GM12878 (cell line): ENCODE measurements at regions of chr2 and their contacts with region 1.

Region 1: DNA sequence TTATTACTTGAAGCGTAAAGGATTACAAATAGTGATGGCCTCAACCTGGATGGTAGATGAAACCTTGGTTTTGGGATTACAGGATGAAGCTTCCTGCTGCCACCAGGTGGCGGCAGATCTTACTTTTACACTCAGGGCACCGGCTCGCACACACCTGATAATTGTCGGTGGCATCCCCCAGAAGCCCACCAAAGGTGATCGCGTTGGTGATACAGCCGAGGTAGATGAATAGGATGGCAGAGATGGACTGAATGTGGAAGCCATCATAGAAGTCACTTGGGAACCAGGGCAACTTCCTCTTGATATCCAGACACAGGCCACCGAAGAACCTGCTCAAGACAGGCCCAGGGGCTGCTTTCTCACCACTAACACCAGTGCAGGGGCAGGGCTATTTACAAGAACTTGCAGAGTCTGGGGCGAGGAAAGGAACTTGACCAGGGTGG is 51.8 kb downstream of the MTHFD2 start:
- DNase-seq: peak; percentile 17
- ATAC-seq: peak; percentile 95
- H3K4me3 ChIP-seq: no peak overlapping the region
- H3K27ac ChIP-seq: no peak overlapping the region
- H3K4me1 ChIP-seq: no peaks in the 10 kb centered on the region
- H3K27me3 ChIP-seq: no peaks in the 10 kb centered on the region
- CTCF ChIP-seq: peak; percentile 78 to 87 (median 84)
- EP300 ChIP-seq: no peak
- POLR2A ChIP-seq: no peak
- RAD21 ChIP-seq: peak; percentile 82

Region 2: DNA sequence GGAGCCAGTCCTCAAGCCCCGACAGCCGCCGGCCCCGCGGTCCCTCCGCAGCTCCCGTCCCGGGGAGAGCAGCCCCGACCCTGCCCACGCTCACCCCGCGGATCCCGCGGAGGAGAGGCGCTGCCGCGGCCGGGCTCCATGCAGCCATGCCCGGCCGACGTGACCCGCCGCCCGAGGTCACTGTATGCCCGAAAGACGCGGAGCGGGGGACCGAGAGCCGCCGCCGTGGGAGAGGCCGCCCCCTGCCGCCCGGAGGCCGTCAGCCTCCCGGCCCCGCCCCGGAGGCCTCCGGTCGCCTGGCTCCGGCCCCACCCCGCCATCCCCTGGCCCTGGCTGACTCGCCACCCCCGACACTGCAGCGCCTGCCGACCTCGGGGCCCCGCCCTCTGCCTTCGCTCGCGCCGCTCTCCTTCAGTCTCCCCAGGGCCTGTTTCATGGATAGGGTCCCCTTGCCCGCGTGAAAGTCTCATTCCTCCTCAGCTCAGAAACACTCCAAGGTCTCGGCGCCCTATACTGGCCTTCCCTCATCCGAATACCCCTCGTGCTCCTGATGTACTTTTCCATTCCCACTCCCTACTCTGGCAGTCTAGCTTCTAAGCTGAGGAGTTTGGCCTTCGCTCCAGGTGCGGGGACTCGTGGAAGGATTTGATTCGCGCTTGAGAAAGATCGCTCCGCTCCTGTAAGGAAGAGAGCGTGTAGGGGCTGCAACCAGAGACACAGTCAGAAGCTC is 102.3 kb before region 1 on chr2 and contains the start of gene BOLA3:
- CTCF ChIA-PET with region 1: interaction called, 12 read pairs
- POLR2A ChIA-PET with region 1: no interaction called
- RAD21 ChIA-PET with region 1: interaction called, 3 read pairs
- SMC1A ChIA-PET with region 1: interaction called, 6 read pairs
- in situ Hi-C with region 1: no loop called
- intact Hi-C with region 1: no loop called
- DNase-seq: peak; percentile 32
- ATAC-seq: peak; percentile 97
- H3K4me3 ChIP-seq: peak within 1 kb of the TSS; percentile 89
- H3K27ac ChIP-seq: peak within 1 kb of the TSS; percentile 60
- H3K4me1 ChIP-seq: peaks cover 7% of the 10 kb centered on the region
- H3K27me3 ChIP-seq: no peaks in the 10 kb centered on the region
- CTCF ChIP-seq: peak; percentile 66 to 88 (median 67)
- EP300 ChIP-seq: no peak
- POLR2A ChIP-seq: peak; percentile 89
- RAD21 ChIP-seq: peak; percentile 48
- polyA plus RNA-seq, gene BOLA3: 164 to 168 TPM

Region 3: DNA sequence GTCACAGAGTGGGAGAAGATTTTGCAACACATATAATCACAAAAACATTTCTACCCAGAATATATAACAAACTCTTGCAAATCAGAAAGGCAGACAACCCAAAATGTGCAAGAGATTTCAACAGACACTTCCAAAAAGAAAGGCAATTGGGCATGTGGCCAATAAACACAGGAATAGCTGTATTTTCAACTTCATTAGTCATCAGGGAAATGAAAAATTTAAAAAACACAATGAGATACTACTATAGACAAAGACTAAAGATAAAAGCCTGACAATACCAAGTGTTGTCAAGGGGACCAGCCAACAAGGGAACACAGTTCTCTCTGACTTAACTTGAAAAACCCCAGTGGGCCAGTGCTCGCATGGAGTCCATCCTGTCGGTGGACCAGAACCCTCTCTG is 11.3 kb before region 1 on chr2:
- CTCF ChIA-PET with region 1: interaction called, 32 read pairs
- POLR2A ChIA-PET with region 1: interaction called, 5 read pairs
- RAD21 ChIA-PET with region 1: interaction called, 3 read pairs
- SMC1A ChIA-PET with region 1: interaction called, 4 read pairs
- in situ Hi-C with region 1: no loop called
- intact Hi-C with region 1: no loop called
- DNase-seq: no peak
- ATAC-seq: no peak
- H3K4me3 ChIP-seq: no peak overlapping the region
- H3K27ac ChIP-seq: no peak overlapping the region
- H3K4me1 ChIP-seq: no peaks in the 10 kb centered on the region
- H3K27me3 ChIP-seq: no peaks in the 10 kb centered on the region
- CTCF ChIP-seq: no peak
- EP300 ChIP-seq: no peak
- POLR2A ChIP-seq: no peak
- RAD21 ChIP-seq: no peak

Region 4: DNA sequence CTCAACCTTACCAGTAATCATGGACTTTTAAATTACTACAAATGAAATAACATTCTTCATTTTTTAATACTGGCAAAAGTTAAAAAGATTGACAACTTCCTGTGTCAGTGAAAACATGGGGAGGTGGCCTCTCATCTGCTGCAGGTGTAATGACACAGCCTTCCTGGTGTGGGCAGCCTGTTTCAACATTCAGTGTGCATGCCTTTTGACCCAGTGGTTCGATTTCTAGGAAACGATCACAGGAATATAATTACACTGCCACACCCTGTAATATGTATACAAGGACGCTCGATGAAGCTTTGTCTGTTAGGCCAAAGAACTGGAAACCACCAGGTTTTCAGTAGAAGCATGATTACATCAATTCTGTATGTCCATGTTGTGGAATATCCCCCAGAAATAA is 16.9 kb after region 1 on chr2:
- CTCF ChIA-PET with region 1: interaction called, 15 read pairs
- POLR2A ChIA-PET with region 1: no interaction called
- RAD21 ChIA-PET with region 1: interaction called, 3 read pairs
- SMC1A ChIA-PET with region 1: interaction called, 9 read pairs
- in situ Hi-C with region 1: no loop called
- intact Hi-C with region 1: no loop called
- DNase-seq: no peak
- ATAC-seq: peak; percentile 96
- H3K4me3 ChIP-seq: no peak overlapping the region
- H3K27ac ChIP-seq: no peak overlapping the region
- H3K4me1 ChIP-seq: no peaks in the 10 kb centered on the region
- H3K27me3 ChIP-seq: no peaks in the 10 kb centered on the region
- CTCF ChIP-seq: peak; percentile 54 to 75 (median 62)
- EP300 ChIP-seq: no peak
- POLR2A ChIP-seq: no peak
- RAD21 ChIP-seq: peak; percentile 70

Region 5: GRCh38 chr2:74334931-74335333 is 84.7 kb after region 1 on chr2:
- CTCF ChIA-PET with region 1: interaction called, 166 read pairs
- POLR2A ChIA-PET with region 1: interaction called, 3 read pairs
- RAD21 ChIA-PET with region 1: interaction called, 47 read pairs
- SMC1A ChIA-PET with region 1: interaction called, 54 read pairs
- in situ Hi-C with region 1: loop called (anchors 5 kb)
- intact Hi-C with region 1: loop called (anchors 1 kb)
- DNase-seq: peak; percentile 17
- ATAC-seq: peak; percentile 95
- H3K4me3 ChIP-seq: no peak overlapping the region
- H3K27ac ChIP-seq: no peak overlapping the region
- H3K4me1 ChIP-seq: no peaks in the 10 kb centered on the region
- H3K27me3 ChIP-seq: no peaks in the 10 kb centered on the region
- CTCF ChIP-seq: peak; percentile 88 to 97 (median 89)
- EP300 ChIP-seq: no peak
- POLR2A ChIP-seq: no peak
- RAD21 ChIP-seq: peak; percentile 90

Region 6: DNA sequence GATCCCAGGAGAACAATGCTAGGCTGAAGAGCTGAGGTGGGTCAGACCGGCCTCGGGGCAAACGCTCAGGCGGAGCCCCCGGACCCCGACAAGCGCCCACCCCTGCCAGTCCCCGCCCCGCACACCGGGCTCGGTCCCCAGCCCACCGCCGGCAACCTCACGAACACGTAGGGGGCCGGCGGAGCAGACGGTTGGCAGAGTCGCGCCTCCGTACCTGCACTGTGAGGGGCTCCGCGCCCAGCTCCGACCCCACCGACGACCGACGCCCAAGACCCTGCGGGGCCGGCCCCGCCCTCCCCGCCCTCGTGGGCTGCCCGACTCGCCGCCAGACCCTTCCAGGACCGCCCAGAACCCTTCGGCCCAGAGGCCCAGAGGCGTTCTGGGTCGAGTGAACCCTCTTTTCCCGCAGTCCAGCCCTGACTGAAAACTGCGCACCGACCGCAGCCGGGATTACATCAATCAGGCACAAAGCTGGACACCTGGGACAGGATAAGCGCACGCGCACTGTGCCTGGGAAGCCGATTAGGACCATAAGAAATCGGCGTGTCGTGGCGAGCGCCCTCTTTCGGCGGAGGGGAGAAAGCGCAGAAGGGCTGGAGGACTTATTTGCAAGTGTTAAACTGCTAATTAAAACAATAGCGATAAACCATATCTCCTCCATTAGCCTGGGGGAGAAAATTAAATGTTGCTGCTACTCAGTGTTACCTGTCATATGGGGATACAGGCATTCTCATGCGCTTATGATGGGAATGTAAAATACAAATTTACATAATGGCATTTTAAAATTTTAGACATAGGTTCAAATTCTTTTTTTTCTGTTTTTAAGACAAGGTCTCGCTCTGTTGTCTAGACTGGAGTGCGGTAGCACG is 141.6 kb after region 1 on chr2:
- CTCF ChIA-PET with region 1: interaction called, 22 read pairs
- POLR2A ChIA-PET with region 1: no interaction called
- RAD21 ChIA-PET with region 1: interaction called, 14 read pairs
- SMC1A ChIA-PET with region 1: interaction called, 16 read pairs
- in situ Hi-C with region 1: no loop called
- intact Hi-C with region 1: loop called (anchors 5 kb)
- DNase-seq: peak; percentile 76
- ATAC-seq: peak; percentile 89
- H3K4me3 ChIP-seq: peak overlapping the region; percentile 88
- H3K27ac ChIP-seq: peak overlapping the region; percentile 98
- H3K4me1 ChIP-seq: peaks cover 3% of the 10 kb centered on the region; the same call in 1 of the 2 replicates
- H3K27me3 ChIP-seq: no peaks in the 10 kb centered on the region
- CTCF ChIP-seq: peak; percentile 97 to 99 (median 98); a peak in 5 of 6 replicates
- EP300 ChIP-seq: no peak
- POLR2A ChIP-seq: peak; percentile 83
- RAD21 ChIP-seq: peak; percentile 59

Region 7: GRCh38 chr2:74529357-74530238 is 279.4 kb after region 1 on chr2 and contains the starts of genes AUP1 and HTRA2:
- CTCF ChIA-PET with region 1: interaction called, 13 read pairs
- POLR2A ChIA-PET with region 1: no interaction called
- RAD21 ChIA-PET with region 1: interaction called, 3 read pairs
- SMC1A ChIA-PET with region 1: no interaction called
- in situ Hi-C with region 1: no loop called
- intact Hi-C with region 1: no loop called
- DNase-seq: peak; percentile 96
- ATAC-seq: peak; percentile 90
- H3K4me3 ChIP-seq: peak within 1 kb of the TSS; percentile 94
- H3K27ac ChIP-seq: peak within 1 kb of the TSS; percentile 96
- H3K4me1 ChIP-seq: peaks cover 33% of the 10 kb centered on the region
- H3K27me3 ChIP-seq: no peaks in the 10 kb centered on the region
- CTCF ChIP-seq: no peak
- EP300 ChIP-seq: no peak
- POLR2A ChIP-seq: peak; percentile 84
- RAD21 ChIP-seq: no peak
- polyA plus RNA-seq, gene AUP1: 39.1 to 56.5 TPM
- polyA plus RNA-seq, gene HTRA2: 42.3 to 46.4 TPM